B cell (primary cell): ENCODE measurements at regions of chr3 and their contacts with region 1.

Region 1: GRCh38 chr3:10738688-10739372 is 77.2 kb upstream of the SLC6A11 start:
- DNase-seq: peak; percentile 81
- ATAC-seq: peak; percentile 70
- H3K4me3 ChIP-seq: peak overlapping the region in 3 of 5 experiments; percentile 29 to 56 (median 38)
- H3K4me3 Mint-ChIP-seq: peak overlapping the region; percentile 77
- H3K27ac ChIP-seq: no peak overlapping the region
- H3K27ac Mint-ChIP-seq: no peak overlapping the region
- H3K4me1 ChIP-seq: peaks cover 4 to 9% of the 10 kb centered on the region in 2 donors
- H3K4me1 Mint-ChIP-seq: peaks cover 7% of the 10 kb centered on the region
- H3K27me3 ChIP-seq: peaks cover 0 to 22% (median 12%) of the 10 kb centered on the region in 4 experiments
- H3K27me3 Mint-ChIP-seq: peaks cover 64% of the 10 kb centered on the region
- CTCF ChIP-seq: peak; percentile 90

Region 2: DNA sequence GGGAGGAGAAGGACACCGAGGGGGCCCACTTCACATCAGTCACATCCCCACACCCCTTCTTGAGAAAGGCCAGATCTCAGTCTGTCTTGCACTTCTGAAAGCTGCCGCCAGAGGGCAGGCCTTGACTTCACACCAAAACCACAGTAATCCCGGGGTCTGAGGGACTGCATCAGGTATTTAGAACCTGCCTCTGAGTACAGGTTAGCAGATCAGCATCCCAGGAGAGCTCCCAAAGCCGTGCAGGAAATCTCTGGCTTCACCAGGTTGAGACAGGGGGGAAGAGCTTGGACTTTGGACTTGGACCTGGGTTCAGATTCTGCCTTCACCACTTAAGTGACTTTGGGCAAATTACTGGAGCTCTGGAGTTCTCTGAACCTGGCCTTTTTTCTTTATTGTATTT is 1235.5 kb before region 1 on chr3:
- CTCF ChIA-PET with region 1: interaction called, 7 read pairs
- POLR2A ChIA-PET with region 1: no interaction called
- intact Hi-C with region 1: loop called (anchors 2 kb)
- DNase-seq: peak; percentile 80
- ATAC-seq: peak; percentile 71
- H3K4me3 ChIP-seq: no peak overlapping the region
- H3K4me3 Mint-ChIP-seq: no peak overlapping the region
- H3K27ac ChIP-seq: no peak overlapping the region
- H3K27ac Mint-ChIP-seq: no peak overlapping the region
- H3K4me1 ChIP-seq: peaks cover 23 to 27% of the 10 kb centered on the region in 2 donors
- H3K4me1 Mint-ChIP-seq: peaks cover 24% of the 10 kb centered on the region
- H3K27me3 ChIP-seq: peaks cover 0 to 47% (median 26%) of the 10 kb centered on the region in 4 experiments
- H3K27me3 Mint-ChIP-seq: peaks cover 41% of the 10 kb centered on the region
- CTCF ChIP-seq: peak; percentile 85

Region 3: DNA sequence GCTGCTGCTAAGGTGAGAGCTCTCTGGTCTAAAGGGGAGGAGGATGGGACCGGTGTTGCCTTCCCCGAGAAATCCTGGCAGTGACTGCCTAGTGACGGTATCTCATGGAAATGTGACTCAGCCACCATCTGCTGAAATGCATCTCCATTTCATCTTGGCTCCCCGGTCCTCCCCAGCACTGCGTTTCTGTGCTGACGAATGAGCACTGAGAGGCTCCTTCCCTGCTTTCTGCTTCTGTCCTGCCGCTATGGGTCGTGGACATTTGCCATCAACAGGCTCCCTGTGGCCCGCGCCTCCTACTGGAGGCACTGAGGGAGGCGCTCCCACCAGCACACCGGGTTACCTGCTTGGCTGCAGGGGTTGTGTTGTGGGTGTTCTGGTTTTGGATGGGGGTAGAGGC is 404.4 kb before region 1 on chr3:
- CTCF ChIA-PET with region 1: interaction called, 142 read pairs
- POLR2A ChIA-PET with region 1: no interaction called
- intact Hi-C with region 1: no loop called
- DNase-seq: no peak
- ATAC-seq: no peak
- H3K4me3 ChIP-seq: no peak overlapping the region
- H3K4me3 Mint-ChIP-seq: no peak overlapping the region
- H3K27ac ChIP-seq: no peak overlapping the region
- H3K27ac Mint-ChIP-seq: no peak overlapping the region
- H3K4me1 ChIP-seq: peaks cover 13 to 14% of the 10 kb centered on the region in 2 donors
- H3K4me1 Mint-ChIP-seq: peaks cover 38% of the 10 kb centered on the region
- H3K27me3 ChIP-seq: no peaks in the 10 kb centered on the region
- H3K27me3 Mint-ChIP-seq: peaks cover 4% of the 10 kb centered on the region
- CTCF ChIP-seq: no peak

Region 4: DNA sequence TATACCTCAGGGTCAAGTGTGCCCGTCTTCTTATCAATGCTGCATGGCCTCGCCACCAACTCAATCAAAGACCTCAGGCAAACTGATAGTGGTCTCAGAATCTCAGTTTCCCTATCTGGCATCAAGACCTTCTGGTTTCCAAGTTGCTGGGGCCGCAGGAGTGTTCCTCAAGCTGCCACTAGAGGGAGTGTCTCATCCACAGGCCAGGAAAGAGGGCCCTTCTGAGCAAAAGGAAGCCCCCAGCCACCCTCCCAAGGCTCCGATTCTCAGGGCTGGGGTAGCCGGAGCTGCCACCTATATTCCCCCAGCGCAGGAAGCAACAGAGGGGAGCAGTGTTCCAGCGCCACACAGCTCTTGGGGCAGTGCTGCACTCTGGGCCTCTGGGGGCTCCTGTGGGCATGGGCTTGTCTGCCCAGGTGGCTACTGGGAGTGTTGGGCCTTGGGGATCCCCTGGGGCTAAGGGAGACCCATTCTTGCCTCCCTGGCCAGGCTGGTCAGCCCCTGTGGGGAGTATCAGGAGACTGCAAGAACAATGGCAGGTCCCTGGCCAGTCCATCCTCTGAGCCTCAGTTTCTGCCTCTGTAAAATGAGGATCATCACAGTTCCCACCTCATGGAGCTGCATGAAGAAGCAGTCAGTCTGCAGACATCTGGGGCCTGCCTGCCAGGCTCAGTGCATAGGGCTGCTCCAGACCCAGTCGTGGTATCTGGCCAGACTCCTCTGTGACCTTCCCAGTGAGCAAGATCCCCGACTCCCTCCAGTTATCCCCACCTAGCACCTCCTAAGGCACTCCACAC is 394.5 kb before region 1 on chr3:
- CTCF ChIA-PET with region 1: interaction called, 142 read pairs
- POLR2A ChIA-PET with region 1: no interaction called
- intact Hi-C with region 1: no loop called
- DNase-seq: peak; percentile 79
- ATAC-seq: peak; percentile 65
- H3K4me3 ChIP-seq: no peak overlapping the region
- H3K4me3 Mint-ChIP-seq: no peak overlapping the region
- H3K27ac ChIP-seq: no peak overlapping the region
- H3K27ac Mint-ChIP-seq: no peak overlapping the region
- H3K4me1 ChIP-seq: peaks cover 3 to 5% of the 10 kb centered on the region in 2 donors
- H3K4me1 Mint-ChIP-seq: peaks cover 2% of the 10 kb centered on the region
- H3K27me3 ChIP-seq: no peaks in the 10 kb centered on the region
- H3K27me3 Mint-ChIP-seq: peaks cover 4% of the 10 kb centered on the region
- CTCF ChIP-seq: peak; percentile 86

Region 5: GRCh38 chr3:10417849-10418248 is 321.0 kb before region 1 on chr3:
- CTCF ChIA-PET with region 1: interaction called, 10 read pairs
- POLR2A ChIA-PET with region 1: no interaction called
- intact Hi-C with region 1: loop called (anchors 2 kb)
- DNase-seq: no peak
- ATAC-seq: no peak
- H3K4me3 ChIP-seq: no peak overlapping the region
- H3K4me3 Mint-ChIP-seq: no peak overlapping the region
- H3K27ac ChIP-seq: no peak overlapping the region
- H3K27ac Mint-ChIP-seq: no peak overlapping the region
- H3K4me1 ChIP-seq: peaks cover 5 to 28% of the 10 kb centered on the region in 2 donors
- H3K4me1 Mint-ChIP-seq: peaks cover 23% of the 10 kb centered on the region
- H3K27me3 ChIP-seq: no peaks in the 10 kb centered on the region
- H3K27me3 Mint-ChIP-seq: no peaks in the 10 kb centered on the region
- CTCF ChIP-seq: no peak

Region 6: DNA sequence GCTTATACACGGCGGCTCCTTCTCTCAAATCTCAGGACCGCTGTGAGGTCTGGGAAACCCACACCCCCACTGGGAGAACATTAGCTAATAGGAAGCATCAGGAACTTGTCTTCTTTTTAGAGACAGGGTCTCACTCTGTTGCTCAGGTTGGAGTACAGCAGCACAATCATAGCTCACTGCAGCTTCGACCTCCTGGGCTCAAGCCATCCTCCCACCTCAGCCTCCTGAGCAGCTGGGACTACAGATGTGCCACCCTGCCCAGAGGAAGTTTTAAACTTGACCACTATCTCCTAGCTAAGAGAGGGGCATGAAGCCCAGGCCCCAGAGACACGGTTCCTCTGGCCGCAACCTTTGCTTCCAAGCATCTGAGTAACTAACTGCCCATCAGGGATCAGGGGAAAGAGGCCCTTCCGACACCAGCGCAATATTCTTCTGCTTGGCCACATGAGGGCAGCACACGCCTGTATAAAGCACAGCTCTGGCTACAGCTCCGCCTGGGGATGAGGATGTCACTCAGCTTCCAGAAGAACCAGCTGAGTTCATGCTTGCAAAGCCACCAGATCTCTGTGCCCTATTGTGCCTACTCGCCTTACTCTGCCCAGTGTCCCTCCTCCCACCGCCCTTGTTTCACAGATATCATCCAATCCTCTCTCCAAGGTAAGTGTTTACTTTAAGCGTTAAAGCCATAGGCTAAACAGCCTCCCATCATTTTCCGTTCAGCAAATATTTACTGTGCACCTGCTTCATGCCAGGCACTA is 19.7 kb after region 1 on chr3:
- CTCF ChIA-PET with region 1: interaction called, 22 read pairs
- POLR2A ChIA-PET with region 1: no interaction called
- intact Hi-C with region 1: no loop called
- DNase-seq: peak; percentile 63
- ATAC-seq: peak; percentile 56
- H3K4me3 ChIP-seq: no peak overlapping the region
- H3K4me3 Mint-ChIP-seq: no peak overlapping the region
- H3K27ac ChIP-seq: no peak overlapping the region
- H3K27ac Mint-ChIP-seq: no peak overlapping the region
- H3K4me1 ChIP-seq: no peaks in the 10 kb centered on the region
- H3K4me1 Mint-ChIP-seq: no peaks in the 10 kb centered on the region
- H3K27me3 ChIP-seq: peaks cover 0 to 7% (median 3%) of the 10 kb centered on the region in 4 experiments
- H3K27me3 Mint-ChIP-seq: peaks cover 44% of the 10 kb centered on the region
- CTCF ChIP-seq: peak; percentile 78